ENCODE measurements at regions of chr10 and their contacts with region 1.

Region 1: GRCh38 chr10:96287392-96288105 is 16.2 kb upstream of the BLNK start:
- DNase-seq: peak; percentile 50
- H3K4me3 ChIP-seq: no peak overlapping the region
- H3K27ac ChIP-seq: peak overlapping the region; percentile 5 to 24
- H3K4me1 ChIP-seq: no peaks in the 10 kb centered on the region
- H3K27me3 ChIP-seq: no peaks in the 10 kb centered on the region
- CTCF ChIP-seq: no peak
- POLR2A ChIP-seq: no peak

Region 2: GRCh38 chr10:95998255-95998784 is 289.2 kb before region 1 on chr10:
- intact Hi-C with region 1: no loop called
- DNase-seq: no peak
- H3K4me3 ChIP-seq: no peak overlapping the region
- H3K27ac ChIP-seq: no peak overlapping the region
- H3K4me1 ChIP-seq: no peaks in the 10 kb centered on the region
- H3K27me3 ChIP-seq: no peaks in the 10 kb centered on the region
- CTCF ChIP-seq: no peak
- POLR2A ChIP-seq: no peak

Region 3: GRCh38 chr10:96038476-96039387 is 248.8 kb before region 1 on chr10:
- intact Hi-C with region 1: loop called (anchors 10 kb)
- DNase-seq: no peak
- H3K4me3 ChIP-seq: no peak overlapping the region
- H3K27ac ChIP-seq: no peak overlapping the region
- H3K4me1 ChIP-seq: no peaks in the 10 kb centered on the region
- H3K27me3 ChIP-seq: no peaks in the 10 kb centered on the region
- CTCF ChIP-seq: no peak
- POLR2A ChIP-seq: no peak

Region 4: DNA sequence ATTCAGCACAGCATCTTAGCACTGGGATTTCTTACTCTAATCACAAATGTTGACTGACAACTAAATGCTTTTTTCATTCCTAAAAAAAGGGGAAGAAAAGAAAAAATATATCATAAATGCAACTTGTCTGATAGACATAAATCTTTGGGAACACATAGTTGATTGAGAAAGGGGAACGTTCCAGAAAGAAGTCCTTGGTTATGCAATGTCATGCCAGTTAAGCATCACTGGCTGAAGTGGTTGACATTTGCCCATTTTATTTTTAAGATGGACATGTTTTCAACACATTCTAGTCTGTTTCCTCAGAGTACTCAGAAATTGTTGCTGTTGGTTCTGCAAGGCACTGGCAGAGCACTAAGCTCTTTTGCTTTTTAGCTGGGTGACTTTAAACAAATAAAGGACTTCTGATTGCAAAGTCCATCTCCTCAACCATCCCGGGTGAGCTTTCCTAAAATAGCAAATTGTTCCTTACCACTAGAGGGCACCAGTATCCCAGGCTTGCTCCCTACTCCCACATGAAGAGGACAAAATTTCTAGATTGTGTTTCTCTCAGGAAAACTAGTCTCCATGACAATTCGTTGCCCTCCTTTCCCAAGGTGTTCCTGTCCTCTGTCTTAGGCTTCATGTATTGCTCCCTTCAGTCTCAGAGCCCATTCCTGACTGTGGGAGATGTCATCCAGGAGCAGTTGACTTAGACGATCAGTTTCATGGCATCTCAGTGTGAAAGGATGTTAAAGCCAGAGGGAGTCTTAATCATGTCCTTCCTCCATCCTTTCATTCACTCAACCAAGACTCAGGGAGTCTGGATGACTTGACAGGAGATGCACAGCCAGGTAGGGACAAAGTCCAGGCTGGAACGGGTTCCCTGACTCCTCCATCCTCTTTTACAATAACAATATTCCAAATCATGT is 47.3 kb after region 1 on chr10:
- intact Hi-C with region 1: no loop called
- DNase-seq: peak; percentile 14
- H3K4me3 ChIP-seq: no peak overlapping the region
- H3K27ac ChIP-seq: no peak overlapping the region
- H3K4me1 ChIP-seq: no peaks in the 10 kb centered on the region
- H3K27me3 ChIP-seq: no peaks in the 10 kb centered on the region
- CTCF ChIP-seq: peak in 2 of 4 experiments; percentile 33 to 36
- POLR2A ChIP-seq: no peak

Region 5: DNA sequence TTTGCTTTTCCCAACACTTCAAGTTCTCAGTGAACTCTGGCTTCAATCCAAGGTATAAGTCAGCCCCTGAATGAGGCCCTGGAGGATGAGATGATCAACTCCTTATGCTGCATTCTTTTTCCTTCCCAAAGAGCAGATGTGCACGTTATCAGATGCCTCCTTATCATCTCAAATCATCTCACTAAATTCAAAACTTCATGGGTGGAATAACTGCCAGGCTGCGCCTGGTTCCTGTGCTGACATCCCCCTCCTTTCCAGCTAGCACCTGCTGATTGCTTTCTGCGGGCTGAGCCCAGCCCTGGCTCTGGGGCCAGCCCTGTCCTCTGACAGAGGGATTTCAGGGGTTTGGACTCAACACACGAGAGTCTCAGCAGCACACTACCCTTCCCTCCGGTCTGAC is 181.3 kb after region 1 on chr10:
- intact Hi-C with region 1: no loop called
- DNase-seq: no peak
- H3K4me3 ChIP-seq: no peak overlapping the region
- H3K27ac ChIP-seq: no peak overlapping the region
- H3K4me1 ChIP-seq: no peaks in the 10 kb centered on the region
- H3K27me3 ChIP-seq: no peaks in the 10 kb centered on the region
- CTCF ChIP-seq: no peak
- POLR2A ChIP-seq: no peak